CD8-positive, alpha-beta T cell (primary cell): ENCODE measurements at regions of chr5 and their contacts with region 1.

Region 1: GRCh38 chr5:112707187-112708102 is 30.2 kb upstream of the APC start:
- DNase-seq: peak; percentile 91 to 99 (median 96)
- ATAC-seq: peak; percentile 92
- H3K4me3 ChIP-seq: peak overlapping the region; percentile 83 to 99
- H3K4me3 Mint-ChIP-seq: peak overlapping the region; percentile 92
- H3K27ac ChIP-seq: peak overlapping the region; percentile 75 to 84
- H3K27ac Mint-ChIP-seq: peak overlapping the region; percentile 92
- H3K4me1 ChIP-seq: peaks cover 43% of the 10 kb centered on the region
- H3K4me1 Mint-ChIP-seq: peaks cover 57% of the 10 kb centered on the region
- H3K27me3 ChIP-seq: no peaks in the 10 kb centered on the region
- H3K27me3 Mint-ChIP-seq: no peaks in the 10 kb centered on the region
- CTCF ChIP-seq: no peak

Region 2: GRCh38 chr5:111757355-111758283 is 949.8 kb before region 1 on chr5:
- CTCF ChIA-PET with region 1: no interaction called
- POLR2A ChIA-PET with region 1: no interaction called
- intact Hi-C with region 1: loop called in 1 of 2 experiments (anchors 10 kb)
- DNase-seq: peak; percentile 39 to 89 (median 81)
- ATAC-seq: peak; percentile 81
- H3K4me3 ChIP-seq: peak overlapping the region; percentile 59 to 88
- H3K4me3 Mint-ChIP-seq: peak overlapping the region; percentile 90
- H3K27ac ChIP-seq: peak overlapping the region; percentile 51 to 74
- H3K27ac Mint-ChIP-seq: peak overlapping the region; percentile 90
- H3K4me1 ChIP-seq: peaks cover 13% of the 10 kb centered on the region
- H3K4me1 Mint-ChIP-seq: peaks cover 21% of the 10 kb centered on the region
- H3K27me3 ChIP-seq: no peaks in the 10 kb centered on the region
- H3K27me3 Mint-ChIP-seq: no peaks in the 10 kb centered on the region
- CTCF ChIP-seq: no peak

Region 3: GRCh38 chr5:112737463-112738190 is 30.2 kb after region 1 on chr5 and contains the start of gene APC:
- CTCF ChIA-PET with region 1: no interaction called
- POLR2A ChIA-PET with region 1: interaction called, 4 read pairs
- intact Hi-C with region 1: loop called (anchors 1 kb)
- DNase-seq: peak; percentile 52 to 88 (median 74)
- ATAC-seq: peak; percentile 96
- H3K4me3 ChIP-seq: peak within 1 kb of the TSS; percentile 62 to 79
- H3K4me3 Mint-ChIP-seq: peak within 1 kb of the TSS; percentile 95
- H3K27ac ChIP-seq: peak within 1 kb of the TSS; percentile 18 to 26
- H3K27ac Mint-ChIP-seq: peak within 1 kb of the TSS; percentile 69
- H3K4me1 ChIP-seq: peaks cover 10% of the 10 kb centered on the region
- H3K4me1 Mint-ChIP-seq: peaks cover 33% of the 10 kb centered on the region
- H3K27me3 ChIP-seq: no peaks in the 10 kb centered on the region
- H3K27me3 Mint-ChIP-seq: no peaks in the 10 kb centered on the region
- CTCF ChIP-seq: no peak
- total RNA-seq, gene APC: 14.5 to 19.1 TPM

Region 4: GRCh38 chr5:112860929-112861637 is 153.6 kb after region 1 on chr5 and contains the start of gene SRP19:
- CTCF ChIA-PET with region 1: interaction called, 3 read pairs
- POLR2A ChIA-PET with region 1: no interaction called
- intact Hi-C with region 1: loop called (anchors 5 kb)
- DNase-seq: peak; percentile 82 to 97 (median 91)
- ATAC-seq: peak; percentile 92
- H3K4me3 ChIP-seq: peak within 1 kb of the TSS; percentile 64 to 99
- H3K4me3 Mint-ChIP-seq: peak within 1 kb of the TSS; percentile 97
- H3K27ac ChIP-seq: peak within 1 kb of the TSS; percentile 82 to 93
- H3K27ac Mint-ChIP-seq: peak within 1 kb of the TSS; percentile 99
- H3K4me1 ChIP-seq: peaks cover 35% of the 10 kb centered on the region
- H3K4me1 Mint-ChIP-seq: peaks cover 43% of the 10 kb centered on the region
- H3K27me3 ChIP-seq: no peaks in the 10 kb centered on the region
- H3K27me3 Mint-ChIP-seq: peaks cover 8% of the 10 kb centered on the region
- CTCF ChIP-seq: no peak
- total RNA-seq, gene SRP19: 50.0 to 52.0 TPM